ENCODE measurements at regions of chr6 and their contacts with region 1.

Region 1: GRCh38 chr6:4012826-4013225 is 66.1 kb downstream of the FAM217A start:
- DNase-seq: no peak
- H3K27ac ChIP-seq: no peak overlapping the region
- CTCF ChIP-seq: no peak

Region 2: GRCh38 chr6:3742426-3743344 is 270.1 kb before region 1 on chr6:
- CTCF ChIA-PET with region 1: interaction called, 10 read pairs
- POLR2A ChIA-PET with region 1: no interaction called
- DNase-seq: peak; percentile 71
- H3K27ac ChIP-seq: peak overlapping the region; percentile 76
- CTCF ChIP-seq: peak; percentile 92

Region 3: DNA sequence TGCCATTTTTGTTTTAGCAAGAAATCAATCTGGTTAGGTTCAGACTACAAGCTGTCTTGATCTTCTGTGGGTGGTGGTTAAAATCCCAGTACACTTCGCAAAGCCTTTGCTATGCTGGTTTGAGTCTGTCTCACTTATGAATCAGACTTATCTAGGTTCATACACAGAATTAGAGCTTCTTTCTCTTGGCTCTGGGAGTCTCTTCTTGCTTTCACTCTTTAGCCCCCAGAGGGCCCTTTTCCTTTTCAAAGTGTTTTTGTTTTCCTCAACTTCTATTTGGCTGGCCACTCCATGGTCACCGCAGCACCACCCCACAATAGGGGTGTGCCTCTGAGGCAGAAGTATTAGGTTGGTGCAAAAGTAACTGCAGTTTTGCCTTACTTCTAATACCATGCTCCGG is 101.3 kb after region 1 on chr6:
- CTCF ChIA-PET with region 1: no interaction called
- POLR2A ChIA-PET with region 1: no interaction called
- DNase-seq: no peak
- H3K27ac ChIP-seq: no peak overlapping the region
- CTCF ChIP-seq: no peak